Esophagus muscularis mucosa (tissue), 4 donors: ENCODE measurements at regions of chr16 and their contacts with region 1.

Region 1: GRCh38 chr16:31198207-31198882 is 4.2 kb downstream of the PYCARD start:
- DNase-seq: no peak
- H3K4me3 ChIP-seq: no peak overlapping the region
- H3K27ac ChIP-seq: no peak overlapping the region
- H3K4me1 ChIP-seq: peaks cover 13 to 30% (median 26%) of the 10 kb centered on the region in 4 donors
- H3K27me3 ChIP-seq: peaks cover 0 to 20% (median 3%) of the 10 kb centered on the region in 4 donors
- CTCF ChIP-seq: no peak
- EP300 ChIP-seq: no peak
- POLR2A ChIP-seq: no peak

Region 2: GRCh38 chr16:31168848-31169247 is 29.5 kb before region 1 on chr16:
- intact Hi-C with region 1: loop called (anchors 2 kb)
- DNase-seq: no peak
- H3K4me3 ChIP-seq: no peak overlapping the region
- H3K27ac ChIP-seq: no peak overlapping the region
- H3K4me1 ChIP-seq: peaks cover 0 to 5% (median 0%) of the 10 kb centered on the region in 4 donors
- H3K27me3 ChIP-seq: no peaks in the 10 kb centered on the region
- CTCF ChIP-seq: no peak
- EP300 ChIP-seq: no peak
- POLR2A ChIP-seq: no peak